ENCODE measurements at regions of chr14 and their contacts with region 1.

Region 1: DNA sequence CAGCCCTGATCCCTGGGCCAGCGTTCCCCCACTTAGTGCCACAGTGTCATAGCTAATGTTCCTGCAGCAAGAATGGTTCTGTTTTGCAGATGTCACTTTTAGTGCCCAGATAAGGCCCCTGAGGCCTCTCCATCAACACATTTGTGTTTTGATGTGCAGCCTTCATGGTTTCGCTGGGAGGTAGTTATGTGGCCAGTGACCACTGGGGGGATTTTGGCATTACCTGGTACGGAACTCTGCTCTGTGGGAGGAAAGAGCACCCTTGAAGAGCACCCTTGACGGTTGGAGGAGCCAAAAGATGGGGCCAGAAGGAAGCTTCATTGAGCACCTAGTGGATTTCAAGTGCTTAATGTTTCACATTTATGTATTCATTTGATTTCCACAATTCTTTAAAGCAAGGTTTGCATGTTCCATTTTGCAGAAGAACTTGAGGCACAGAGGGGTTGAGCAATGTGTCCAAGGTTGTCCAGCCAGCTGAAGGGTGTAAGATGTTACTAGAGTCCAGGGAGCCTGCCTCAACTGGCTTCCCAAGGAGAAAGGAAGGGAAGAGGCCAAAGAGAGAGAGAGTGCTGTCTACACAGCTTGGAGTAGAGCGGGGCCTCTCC is 13.0 kb downstream of the SERPINA11 start:
- DNase-seq: no peak
- ATAC-seq: no peak
- H3K4me3 ChIP-seq: no peak overlapping the region
- H3K27ac ChIP-seq: no peak overlapping the region
- H3K4me1 ChIP-seq: no peaks in the 10 kb centered on the region
- H3K27me3 ChIP-seq: no peaks in the 10 kb centered on the region
- CTCF ChIP-seq: no peak
- POLR2A ChIP-seq: no peak
- RAD21 ChIP-seq: no peak

Region 2: DNA sequence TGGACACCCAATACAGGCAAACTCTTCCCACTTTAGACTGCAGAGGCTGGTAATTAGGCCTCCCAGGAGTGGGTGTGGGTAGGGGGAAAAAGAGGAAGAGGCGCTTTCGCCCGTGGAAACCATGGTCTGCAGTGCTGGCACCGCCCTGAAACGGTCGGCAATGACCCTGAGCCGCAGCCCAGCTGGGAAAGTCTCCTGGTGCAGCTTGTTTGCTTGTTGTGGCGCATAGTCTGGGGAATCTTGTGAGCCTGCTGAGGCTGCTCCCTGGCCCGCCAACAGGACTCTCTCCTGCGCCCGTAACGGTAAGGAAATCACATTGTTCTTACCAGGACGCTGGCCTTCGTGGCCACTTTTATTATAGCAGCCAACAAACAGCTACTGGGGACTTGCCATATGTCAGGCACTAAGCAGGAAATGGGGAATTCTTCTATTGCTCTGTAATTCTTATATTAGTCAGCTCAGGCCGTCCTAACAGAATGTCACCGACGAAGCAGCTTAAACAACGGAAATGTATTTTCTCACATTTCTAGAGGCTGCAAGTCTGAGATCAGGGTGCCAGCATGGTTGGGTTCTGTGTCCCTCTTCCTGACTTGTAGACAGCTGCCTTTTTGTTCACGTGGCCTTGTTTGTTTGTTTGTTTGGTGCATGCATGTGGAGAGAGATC is 1978.5 kb before region 1 on chr14:
- CTCF ChIA-PET with region 1: no interaction called
- POLR2A ChIA-PET with region 1: no interaction called
- dilution Hi-C with region 1: no loop called
- in situ Hi-C with region 1: no loop called
- intact Hi-C with region 1: no loop called
- DNase-seq: peak; percentile 82
- ATAC-seq: peak; percentile 65
- H3K4me3 ChIP-seq: no peak overlapping the region
- H3K27ac ChIP-seq: peak overlapping the region; percentile 38; the same call in 1 of the 2 replicates
- H3K4me1 ChIP-seq: peaks cover 6% of the 10 kb centered on the region
- H3K27me3 ChIP-seq: no peaks in the 10 kb centered on the region
- CTCF ChIP-seq: no peak
- POLR2A ChIP-seq: no peak
- RAD21 ChIP-seq: no peak

Region 3: DNA sequence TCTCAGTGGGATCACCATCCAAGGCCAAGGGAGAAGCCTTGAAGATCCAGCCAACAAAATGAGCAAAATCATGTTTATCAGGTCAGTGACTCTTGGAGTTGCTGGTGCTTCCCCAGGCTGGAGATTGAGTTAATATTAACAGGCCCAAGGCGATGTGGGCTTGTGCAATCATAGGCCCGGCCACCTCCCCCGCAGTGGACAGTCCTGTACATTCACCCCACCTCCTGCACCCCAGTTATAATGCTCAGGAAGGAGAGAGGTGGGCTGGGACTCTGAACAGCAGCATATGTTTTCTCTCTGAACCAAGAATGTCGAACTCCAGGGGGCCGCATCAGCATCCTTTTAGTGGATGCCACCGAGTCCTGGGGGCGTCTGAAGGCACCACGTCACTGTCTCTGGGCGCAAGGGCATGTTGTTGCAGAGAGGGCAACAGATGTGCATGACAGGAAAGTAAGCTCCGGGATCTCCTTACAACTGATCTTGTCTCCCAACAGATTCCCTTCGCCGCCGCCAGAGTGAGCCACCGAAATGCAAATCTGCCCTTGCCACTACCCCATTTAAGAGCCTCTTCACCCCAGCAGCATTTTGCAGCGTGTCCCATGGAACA is 84.3 kb before region 1 on chr14:
- CTCF ChIA-PET with region 1: no interaction called
- POLR2A ChIA-PET with region 1: no interaction called
- dilution Hi-C with region 1: no loop called
- in situ Hi-C with region 1: no loop called
- intact Hi-C with region 1: no loop called
- DNase-seq: peak; percentile 65
- ATAC-seq: peak; percentile 93
- H3K4me3 ChIP-seq: no peak overlapping the region
- H3K27ac ChIP-seq: no peak overlapping the region
- H3K4me1 ChIP-seq: 0 out of 2 replicates have a peak, but pooled peaks cover 2% of the 10 kb centered on the region
- H3K27me3 ChIP-seq: no peaks in the 10 kb centered on the region
- CTCF ChIP-seq: peak; percentile 52
- POLR2A ChIP-seq: no peak
- RAD21 ChIP-seq: peak; percentile 67

Region 4: GRCh38 chr14:94427016-94427613 is 12.4 kb before region 1 on chr14:
- CTCF ChIA-PET with region 1: no interaction called
- POLR2A ChIA-PET with region 1: no interaction called
- dilution Hi-C with region 1: no loop called
- in situ Hi-C with region 1: no loop called
- intact Hi-C with region 1: no loop called
- DNase-seq: no peak
- ATAC-seq: no peak
- H3K4me3 ChIP-seq: no peak overlapping the region
- H3K27ac ChIP-seq: no peak overlapping the region
- H3K4me1 ChIP-seq: no peaks in the 10 kb centered on the region
- H3K27me3 ChIP-seq: peaks cover 9% of the 10 kb centered on the region; the same call in 1 of the 2 replicates
- CTCF ChIP-seq: no peak
- POLR2A ChIP-seq: no peak
- RAD21 ChIP-seq: no peak

Region 5: DNA sequence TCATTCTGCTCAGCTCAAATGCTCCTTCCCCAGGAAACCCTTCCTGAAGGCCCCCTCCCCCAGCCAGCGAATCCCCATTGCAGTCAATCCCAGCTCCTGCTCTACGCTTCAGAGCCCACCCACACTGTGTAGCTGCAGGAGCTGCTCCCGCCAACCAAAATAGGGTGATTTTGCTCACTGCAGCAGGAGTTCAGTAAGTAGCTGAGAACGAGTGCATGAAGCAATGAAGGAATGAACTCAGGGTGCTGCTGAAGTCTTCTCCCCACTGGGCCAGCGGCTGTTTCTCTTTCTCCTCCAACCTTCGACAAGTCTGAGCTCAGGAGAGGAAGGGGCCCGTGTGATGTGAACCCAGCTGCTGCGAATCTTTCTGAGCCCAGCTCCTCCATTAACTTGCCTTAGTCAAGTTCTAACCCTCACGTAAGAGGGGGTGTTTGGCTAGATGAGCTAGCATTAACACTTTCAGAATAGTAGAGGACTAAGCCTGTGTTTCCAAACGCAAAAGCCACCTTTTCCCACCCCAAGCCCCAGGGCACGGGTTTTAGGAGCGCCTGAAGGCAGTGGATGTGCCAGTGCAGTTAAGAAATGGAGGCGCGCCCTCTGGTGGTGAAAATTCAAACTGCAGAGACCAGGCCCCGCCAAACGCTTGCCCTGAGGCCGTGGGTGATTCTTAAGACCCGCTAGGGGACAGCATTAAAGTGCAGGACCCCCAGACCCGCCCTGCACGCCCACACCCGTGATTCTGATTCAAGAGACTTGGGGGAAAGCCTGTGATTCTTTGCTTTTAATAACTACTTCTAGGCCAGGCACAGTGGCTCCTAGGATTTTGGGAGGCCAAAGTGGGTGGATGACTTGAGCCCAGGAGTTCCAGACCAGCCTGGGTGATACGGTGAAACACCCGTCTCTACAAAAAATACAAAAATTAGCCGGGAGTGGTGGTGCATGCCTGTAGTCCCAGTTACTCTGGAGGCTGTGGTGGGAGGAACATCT is 109.7 kb after region 1 on chr14:
- CTCF ChIA-PET with region 1: no interaction called
- POLR2A ChIA-PET with region 1: no interaction called
- dilution Hi-C with region 1: no loop called
- in situ Hi-C with region 1: no loop called
- intact Hi-C with region 1: loop called (anchors 5 kb)
- DNase-seq: peak; percentile 36
- ATAC-seq: peak; percentile 96
- H3K4me3 ChIP-seq: no peak overlapping the region
- H3K27ac ChIP-seq: no peak overlapping the region
- H3K4me1 ChIP-seq: no peaks in the 10 kb centered on the region
- H3K27me3 ChIP-seq: no peaks in the 10 kb centered on the region
- CTCF ChIP-seq: peak; percentile 69
- POLR2A ChIP-seq: no peak
- RAD21 ChIP-seq: peak; percentile 54

Region 6: GRCh38 chr14:94975366-94975765 is 535.8 kb after region 1 on chr14:
- CTCF ChIA-PET with region 1: no interaction called
- POLR2A ChIA-PET with region 1: no interaction called
- dilution Hi-C with region 1: no loop called
- in situ Hi-C with region 1: no loop called
- intact Hi-C with region 1: no loop called
- DNase-seq: no peak
- ATAC-seq: no peak
- H3K4me3 ChIP-seq: no peak overlapping the region
- H3K27ac ChIP-seq: no peak overlapping the region
- H3K4me1 ChIP-seq: no peaks in the 10 kb centered on the region
- H3K27me3 ChIP-seq: no peaks in the 10 kb centered on the region
- CTCF ChIP-seq: no peak
- POLR2A ChIP-seq: no peak
- RAD21 ChIP-seq: no peak